ENCODE measurements at regions of chr17 and their contacts with region 1.

Region 1: DNA sequence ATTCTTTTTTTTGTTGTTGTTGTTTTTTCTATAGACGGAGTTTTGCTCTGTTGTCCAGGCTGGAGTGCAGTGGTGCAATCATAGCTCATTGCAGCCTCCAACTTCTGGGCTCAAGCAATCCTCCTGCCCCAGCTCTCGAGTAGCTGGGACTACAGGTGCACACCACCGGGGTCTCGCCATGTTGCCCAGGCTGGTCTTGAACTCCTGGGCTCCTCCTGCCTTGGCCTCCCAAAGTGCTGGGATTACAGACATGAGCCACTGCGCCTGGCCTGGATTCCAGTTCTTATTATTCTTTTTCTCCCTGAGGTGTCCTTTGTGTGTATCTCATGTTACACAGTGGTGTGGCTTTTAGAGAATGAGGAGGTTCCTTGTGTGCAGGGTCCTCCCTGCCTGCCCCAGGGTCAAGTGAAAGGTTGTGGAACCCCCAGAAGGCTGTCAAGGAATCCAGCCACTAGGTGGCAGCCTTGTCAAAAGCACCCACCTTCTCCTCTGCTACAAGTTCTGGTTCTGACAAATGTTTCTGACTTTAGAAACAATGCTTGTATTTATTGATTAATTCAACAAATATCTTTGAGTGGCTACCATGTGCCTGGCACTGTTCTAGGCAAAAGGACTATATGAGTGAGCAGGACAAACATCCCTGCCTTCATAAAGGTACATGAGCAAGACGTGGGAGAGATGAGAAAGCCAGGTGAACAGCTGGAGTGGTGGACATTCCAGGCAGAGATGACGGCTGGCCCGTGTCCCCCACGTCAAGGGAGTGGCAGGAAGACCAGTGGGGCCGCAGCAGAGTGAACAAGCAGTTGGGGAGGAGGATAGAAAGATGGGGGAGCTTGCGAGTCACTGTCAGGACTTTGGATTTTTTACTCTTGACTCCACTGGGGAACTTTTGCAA is 112.4 kb downstream of the SPECC1 start:
- DNase-seq: no peak
- H3K4me3 ChIP-seq: no peak overlapping the region
- H3K27ac ChIP-seq: no peak overlapping the region
- H3K4me1 ChIP-seq: peaks cover 9 to 16% (median 13%) of the 10 kb centered on the region in 4 donors
- H3K27me3 ChIP-seq: no peaks in the 10 kb centered on the region
- CTCF ChIP-seq: peak; percentile 76 to 87 (median 82)
- EP300 ChIP-seq: no peak
- POLR2A ChIP-seq: no peak

Region 2: GRCh38 chr17:19992803-19993713 is 128.5 kb before region 1 on chr17:
- intact Hi-C with region 1: loop called (anchors 1 kb)
- DNase-seq: peak; percentile 96
- H3K4me3 ChIP-seq: peak overlapping the region in 3 of 4 donors; percentile 10 to 23 (median 15)
- H3K27ac ChIP-seq: no peak overlapping the region
- H3K4me1 ChIP-seq: peaks cover 4 to 6% (median 5%) of the 10 kb centered on the region in 4 donors
- H3K27me3 ChIP-seq: peaks cover 0 to 11% (median 0%) of the 10 kb centered on the region in 4 donors
- CTCF ChIP-seq: peak; percentile 76 to 87 (median 78)
- EP300 ChIP-seq: no peak
- POLR2A ChIP-seq: no peak

Region 3: GRCh38 chr17:20226814-20227482 is 105.3 kb after region 1 on chr17:
- intact Hi-C with region 1: loop called (anchors 2 kb)
- DNase-seq: no peak
- H3K4me3 ChIP-seq: no peak overlapping the region
- H3K27ac ChIP-seq: no peak overlapping the region
- H3K4me1 ChIP-seq: peaks cover 0 to 7% (median 5%) of the 10 kb centered on the region in 4 donors
- H3K27me3 ChIP-seq: no peaks in the 10 kb centered on the region
- CTCF ChIP-seq: peak; percentile 65 to 85 (median 67)
- EP300 ChIP-seq: no peak
- POLR2A ChIP-seq: no peak

Region 4: GRCh38 chr17:20315821-20316220 is 194.2 kb after region 1 on chr17:
- intact Hi-C with region 1: loop called (anchors 2 kb)
- DNase-seq: no peak
- H3K4me3 ChIP-seq: no peak overlapping the region
- H3K27ac ChIP-seq: no peak overlapping the region
- H3K4me1 ChIP-seq: peaks cover 6 to 8% (median 7%) of the 10 kb centered on the region in 4 donors
- H3K27me3 ChIP-seq: no peaks in the 10 kb centered on the region
- CTCF ChIP-seq: no peak
- EP300 ChIP-seq: no peak
- POLR2A ChIP-seq: no peak

Measured in esophagus muscularis mucosa (tissue), 4 donors.